Stomach (tissue), 19 donors: ENCODE measurements at regions of chr1 and their contacts with region 1.

Region 1: DNA sequence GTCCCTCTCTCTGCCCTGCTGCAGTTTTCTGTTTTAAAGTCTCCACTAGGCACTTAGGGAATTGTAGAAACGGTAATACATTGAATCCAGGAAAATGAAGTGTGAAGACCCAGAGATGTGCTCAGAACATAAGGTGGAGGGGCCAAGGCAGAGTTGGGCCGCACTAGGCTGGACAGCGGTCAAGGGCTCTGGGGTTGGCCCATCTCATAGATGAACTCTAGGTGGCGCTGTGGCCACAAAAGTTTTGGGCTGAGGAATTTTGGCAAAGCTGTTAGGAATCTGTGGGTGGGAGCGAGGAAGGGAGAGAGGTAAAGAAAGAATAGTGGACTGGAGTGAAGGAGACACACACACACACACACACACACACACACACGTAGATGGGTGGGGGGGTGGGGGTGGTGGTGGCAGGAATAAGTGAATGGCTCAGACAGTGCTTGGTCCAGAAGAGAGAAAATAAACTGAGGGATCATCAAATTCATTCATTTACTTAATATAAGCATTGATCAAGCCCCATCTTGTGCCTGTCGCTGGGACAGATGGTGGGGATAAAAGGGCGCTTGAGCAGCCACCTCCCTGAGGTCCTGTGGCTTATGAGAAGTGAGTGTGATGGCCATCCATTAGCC is 258.5 kb downstream of the TRABD2B start:
- DNase-seq: peak; percentile 56 to 86
- H3K4me3 ChIP-seq: no peak overlapping the region
- H3K27ac ChIP-seq: no peak overlapping the region
- H3K4me1 ChIP-seq: no peaks in the 10 kb centered on the region
- H3K27me3 ChIP-seq: peaks cover 0 to 29% (median 0%) of the 10 kb centered on the region in 3 donors
- CTCF ChIP-seq: peak in 5 of 7 experiments; percentile 46 to 80 (median 69)
- EP300 ChIP-seq: no peak
- POLR2A ChIP-seq: no peak

Region 2: GRCh38 chr1:48061162-48062136 is 322.8 kb after region 1 on chr1:
- intact Hi-C with region 1: loop called (anchors 5 kb)
- DNase-seq: peak; percentile 52 to 85
- H3K4me3 ChIP-seq: no peak overlapping the region
- H3K27ac ChIP-seq: no peak overlapping the region
- H3K4me1 ChIP-seq: peaks cover 0 to 12% (median 0%) of the 10 kb centered on the region in 4 donors
- H3K27me3 ChIP-seq: peaks cover 0 to 15% (median 0%) of the 10 kb centered on the region in 3 donors
- CTCF ChIP-seq: peak in 4 of 7 experiments; percentile 19 to 48 (median 37)
- EP300 ChIP-seq: no peak
- POLR2A ChIP-seq: no peak